Sigmoid colon (tissue), 7 donors: ENCODE measurements at regions of chr13 and their contacts with region 1.

Region 1: DNA sequence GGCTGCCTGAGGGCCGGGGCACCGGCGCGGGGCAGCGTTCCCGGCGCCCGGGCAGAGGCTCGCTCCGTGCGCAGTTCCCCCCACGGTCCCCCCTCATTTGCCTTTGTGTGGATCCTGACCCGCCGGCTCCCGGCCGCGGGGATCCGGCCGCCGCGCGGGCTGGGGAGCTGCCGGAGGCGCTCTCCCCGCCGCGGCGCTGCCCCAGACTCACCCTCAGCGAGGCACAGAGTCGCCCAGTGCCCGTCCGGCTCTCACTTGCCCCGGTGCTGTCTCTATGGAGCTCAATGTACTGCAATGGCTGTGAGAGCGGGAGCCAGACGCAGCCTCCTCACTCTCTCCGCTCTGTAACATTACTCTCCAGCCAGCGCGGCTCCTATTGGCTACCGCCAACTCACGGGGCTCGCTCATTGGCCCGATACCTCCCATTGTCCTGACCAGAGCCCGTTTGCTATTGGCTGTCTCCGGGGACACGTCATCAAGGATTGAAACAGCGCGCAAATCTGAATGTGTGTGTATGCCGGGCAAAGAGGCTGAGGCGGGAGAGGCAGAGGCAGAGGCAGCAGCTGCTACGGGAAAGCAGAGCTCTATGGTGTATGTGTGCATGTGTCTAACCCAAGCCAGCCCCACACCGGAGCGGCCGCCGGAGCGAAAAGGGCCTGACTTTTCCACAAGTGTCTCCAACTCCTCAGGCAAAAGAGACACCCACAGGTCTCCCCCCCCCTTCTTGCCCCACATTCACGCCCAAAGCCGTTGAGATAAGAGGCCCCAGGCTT is at the start of gene HMGB1:
- DNase-seq: peak; percentile 99
- H3K4me3 ChIP-seq: peak within 1 kb of the TSS; percentile 51 to 96 (median 90)
- H3K27ac ChIP-seq: peak within 1 kb of the TSS; percentile 99 to 100 (median 100)
- H3K4me1 ChIP-seq: peaks cover 2 to 30% (median 24%) of the 10 kb centered on the region in 4 donors
- H3K27me3 ChIP-seq: no peaks in the 10 kb centered on the region
- CTCF ChIP-seq: no peak
- EP300 ChIP-seq: no peak
- POLR2A ChIP-seq: peak; percentile 98
- total RNA-seq, gene HMGB1: 212 to 492 (median 270) TPM

Region 2: GRCh38 chr13:30132623-30133553 is 332.9 kb before region 1 on chr13:
- intact Hi-C with region 1: loop called (anchors 2 kb)
- DNase-seq: peak; percentile 99
- H3K4me3 ChIP-seq: peak overlapping the region in 1 of 4 donors; percentile 2
- H3K27ac ChIP-seq: peak overlapping the region in 3 of 4 donors; percentile 6 to 41 (median 7)
- H3K4me1 ChIP-seq: peaks cover 0 to 24% (median 15%) of the 10 kb centered on the region in 4 donors
- H3K27me3 ChIP-seq: no peaks in the 10 kb centered on the region
- CTCF ChIP-seq: peak; percentile 85 to 97 (median 94)
- EP300 ChIP-seq: no peak
- POLR2A ChIP-seq: no peak

Region 3: DNA sequence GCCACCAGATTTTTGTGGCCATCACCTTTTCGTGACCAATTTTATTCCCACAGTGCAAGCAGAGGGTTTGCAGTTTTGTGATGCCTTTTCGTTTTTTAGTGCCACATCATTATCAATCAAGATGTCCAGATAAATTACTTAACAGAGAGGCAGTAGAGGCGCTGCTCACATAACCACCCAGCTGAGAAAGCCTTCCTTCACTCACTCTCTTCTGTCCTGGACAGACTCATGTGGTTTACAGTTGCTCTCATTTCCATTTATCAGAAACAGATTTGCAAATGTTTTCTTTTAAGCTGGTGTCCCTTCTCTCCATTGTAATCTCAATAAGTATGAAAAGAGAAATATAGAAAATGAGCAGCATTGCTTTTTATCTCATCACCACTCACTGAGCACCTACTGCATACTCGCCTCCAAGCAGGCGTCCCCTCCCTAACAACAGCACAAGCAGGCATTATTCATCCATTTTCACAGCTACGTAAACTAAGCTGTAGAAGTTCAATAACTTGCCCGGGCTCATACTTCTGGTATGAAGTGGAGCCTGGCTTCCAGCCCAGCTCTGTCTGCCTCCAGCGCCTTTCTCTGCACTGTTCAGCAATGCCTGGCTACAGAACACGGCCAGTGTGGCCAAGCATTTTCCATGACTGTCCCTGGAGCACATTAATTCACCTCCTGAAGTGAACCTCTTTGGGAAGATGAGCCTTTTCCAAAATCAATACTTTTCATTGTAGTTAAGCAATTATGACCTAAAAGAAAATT is 123.8 kb before region 1 on chr13:
- intact Hi-C with region 1: loop called (anchors 5 kb)
- DNase-seq: peak; percentile 97
- H3K4me3 ChIP-seq: no peak overlapping the region
- H3K27ac ChIP-seq: peak overlapping the region; percentile 73 to 86 (median 80)
- H3K4me1 ChIP-seq: peaks cover 0 to 60% (median 54%) of the 10 kb centered on the region in 4 donors
- H3K27me3 ChIP-seq: no peaks in the 10 kb centered on the region
- CTCF ChIP-seq: no peak
- EP300 ChIP-seq: peak in 2 of 4 donors; percentile 41 to 53
- POLR2A ChIP-seq: no peak

Region 4: GRCh38 chr13:30572859-30573275 is 107.1 kb after region 1 on chr13:
- intact Hi-C with region 1: loop called (anchors 5 kb)
- DNase-seq: no peak
- H3K4me3 ChIP-seq: peak overlapping the region; percentile 18 to 46 (median 38)
- H3K27ac ChIP-seq: peak overlapping the region; percentile 50 to 70 (median 66)
- H3K4me1 ChIP-seq: peaks cover 0 to 46% (median 26%) of the 10 kb centered on the region in 4 donors
- H3K27me3 ChIP-seq: no peaks in the 10 kb centered on the region
- CTCF ChIP-seq: no peak
- EP300 ChIP-seq: no peak
- POLR2A ChIP-seq: no peak

Region 5: GRCh38 chr13:30802953-30803478 is 337.2 kb after region 1 on chr13:
- intact Hi-C with region 1: loop called (anchors 2 kb)
- DNase-seq: peak; percentile 93
- H3K4me3 ChIP-seq: peak overlapping the region; percentile 17 to 50 (median 46)
- H3K27ac ChIP-seq: peak overlapping the region; percentile 36 to 76 (median 64)
- H3K4me1 ChIP-seq: peaks cover 0 to 30% (median 13%) of the 10 kb centered on the region in 4 donors
- H3K27me3 ChIP-seq: no peaks in the 10 kb centered on the region
- CTCF ChIP-seq: peak; percentile 87 to 94 (median 91)
- EP300 ChIP-seq: peak in 1 of 4 donors; percentile 3
- POLR2A ChIP-seq: no peak

Region 6: GRCh38 chr13:31161828-31162590 is 696.2 kb after region 1 on chr13 and contains the start of gene HSPH1:
- intact Hi-C with region 1: loop called (anchors 5 kb)
- DNase-seq: peak; percentile 99
- H3K4me3 ChIP-seq: peak within 1 kb of the TSS; percentile 66 to 92 (median 75)
- H3K27ac ChIP-seq: peak within 1 kb of the TSS; percentile 84 to 98 (median 90)
- H3K4me1 ChIP-seq: peaks cover 0 to 20% (median 18%) of the 10 kb centered on the region in 4 donors
- H3K27me3 ChIP-seq: no peaks in the 10 kb centered on the region
- CTCF ChIP-seq: peak in 1 of 4 experiments; percentile 10
- EP300 ChIP-seq: peak in 1 of 4 donors; percentile 80
- POLR2A ChIP-seq: peak; percentile 18 to 57
- total RNA-seq, gene HSPH1: 30.7 to 41.5 (median 33.7) TPM